PC-3 (cell line): ENCODE measurements at regions of chr12 and their contacts with region 1.

Region 1: GRCh38 chr12:26097046-26097878 is 27.6 kb downstream of the BHLHE41 start:
- DNase-seq: peak; percentile 93
- ATAC-seq: peak; percentile 94
- H3K4me3 ChIP-seq: 0 out of 2 replicates have a peak overlapping the region, but pooled peaks have one; percentile 8
- H3K27ac ChIP-seq: peak overlapping the region; percentile 36
- H3K4me1 ChIP-seq: peaks cover 50% of the 10 kb centered on the region
- H3K27me3 ChIP-seq: no peaks in the 10 kb centered on the region
- CTCF ChIP-seq: peak; percentile 99

Region 2: DNA sequence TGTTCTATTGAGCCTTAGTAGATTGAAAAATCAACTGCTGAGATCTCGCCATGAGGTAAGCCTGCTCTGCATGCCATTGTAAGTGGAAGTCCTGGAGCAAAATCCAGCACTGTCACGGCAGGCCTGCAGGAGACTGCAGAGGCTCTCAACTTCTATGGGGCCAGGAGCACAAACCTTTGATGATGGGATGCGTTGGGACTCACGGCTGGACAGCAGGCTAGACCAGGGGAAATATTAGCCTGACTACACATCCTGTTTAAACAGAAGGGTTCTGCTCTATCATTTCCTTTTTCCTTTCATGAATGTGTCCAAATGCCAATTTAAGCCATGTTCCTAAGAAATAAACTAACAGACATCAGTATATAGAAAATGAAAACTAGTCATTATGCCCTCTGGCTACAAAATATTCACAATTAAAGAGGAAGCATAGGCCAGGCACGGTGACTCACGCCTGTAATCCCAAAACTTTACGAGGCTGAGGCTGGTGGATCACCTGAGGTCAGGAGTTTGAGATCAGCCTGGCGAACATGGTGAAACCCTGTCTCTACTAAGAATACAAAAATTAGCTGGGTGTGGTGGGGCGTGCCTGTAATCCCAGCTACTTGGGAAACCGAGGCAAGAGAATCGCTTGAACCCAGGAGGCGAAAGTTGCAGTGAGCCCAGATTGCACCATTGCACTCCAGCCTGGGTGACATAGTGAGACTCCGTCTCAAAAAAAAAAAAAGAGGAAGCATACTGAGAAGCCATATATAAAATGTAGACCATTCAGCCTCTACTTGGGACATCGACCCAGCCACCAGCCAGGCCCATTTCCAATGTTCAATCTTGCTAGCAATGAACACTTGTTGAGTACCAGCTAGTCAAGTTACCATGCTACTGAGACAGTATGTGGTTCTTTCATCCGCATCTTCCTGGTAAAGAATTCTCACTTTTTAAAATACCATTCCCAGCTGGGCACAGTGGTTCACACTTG is 172.5 kb before region 1 on chr12:
- CTCF ChIA-PET with region 1: no interaction called
- POLR2A ChIA-PET with region 1: no interaction called
- intact Hi-C with region 1: no loop called
- DNase-seq: peak; percentile 100
- ATAC-seq: peak; percentile 83
- H3K4me3 ChIP-seq: peak overlapping the region; percentile 18; the same call in 1 of the 2 replicates
- H3K27ac ChIP-seq: peak overlapping the region; percentile 92
- H3K4me1 ChIP-seq: peaks cover 72% of the 10 kb centered on the region
- H3K27me3 ChIP-seq: no peaks in the 10 kb centered on the region
- CTCF ChIP-seq: 0 out of 2 replicates have a peak, but pooled peaks have one; percentile 27

Region 3: DNA sequence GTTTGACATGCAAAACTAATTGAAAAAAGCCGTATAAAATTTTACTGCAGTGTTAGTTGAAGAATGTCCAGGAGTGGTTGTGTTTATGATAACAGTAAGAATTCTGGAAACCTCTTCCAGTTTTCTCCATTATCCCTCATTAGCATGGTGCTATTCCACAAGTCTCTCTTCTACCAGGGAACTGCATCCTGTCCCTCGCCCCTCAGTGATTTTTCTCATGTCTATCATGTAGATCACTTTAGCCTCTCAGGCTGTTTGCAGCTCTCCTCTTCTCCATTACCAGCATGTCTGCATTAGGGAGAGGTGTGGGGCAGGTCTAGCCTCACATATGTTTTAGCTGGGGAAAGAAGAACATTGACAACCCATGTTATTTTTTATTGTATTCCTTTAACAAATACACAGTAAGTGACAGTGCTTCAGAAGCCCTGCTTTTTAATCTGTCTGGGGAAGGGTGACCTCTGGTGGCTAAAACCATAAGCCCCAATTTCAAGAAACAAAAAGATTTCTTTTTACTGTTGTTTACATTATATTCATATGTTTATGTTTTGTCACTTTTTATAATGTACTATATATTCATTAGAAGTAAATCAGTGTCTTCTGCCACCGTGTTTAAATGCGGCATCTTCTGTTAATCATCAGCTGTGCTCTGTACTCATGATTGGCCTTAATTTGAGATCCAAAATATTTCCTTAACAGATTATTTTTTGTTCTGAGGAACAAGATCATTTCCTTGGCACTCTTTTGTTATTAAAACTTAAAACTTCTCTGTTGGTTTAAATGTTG is 68.1 kb before region 1 on chr12:
- CTCF ChIA-PET with region 1: interaction called, 8 read pairs
- POLR2A ChIA-PET with region 1: no interaction called
- intact Hi-C with region 1: loop called (anchors 1 kb)
- DNase-seq: peak; percentile 85
- ATAC-seq: peak; percentile 56
- H3K4me3 ChIP-seq: no peak overlapping the region
- H3K27ac ChIP-seq: no peak overlapping the region
- H3K4me1 ChIP-seq: peaks cover 29% of the 10 kb centered on the region
- H3K27me3 ChIP-seq: no peaks in the 10 kb centered on the region
- CTCF ChIP-seq: peak; percentile 97

Region 4: DNA sequence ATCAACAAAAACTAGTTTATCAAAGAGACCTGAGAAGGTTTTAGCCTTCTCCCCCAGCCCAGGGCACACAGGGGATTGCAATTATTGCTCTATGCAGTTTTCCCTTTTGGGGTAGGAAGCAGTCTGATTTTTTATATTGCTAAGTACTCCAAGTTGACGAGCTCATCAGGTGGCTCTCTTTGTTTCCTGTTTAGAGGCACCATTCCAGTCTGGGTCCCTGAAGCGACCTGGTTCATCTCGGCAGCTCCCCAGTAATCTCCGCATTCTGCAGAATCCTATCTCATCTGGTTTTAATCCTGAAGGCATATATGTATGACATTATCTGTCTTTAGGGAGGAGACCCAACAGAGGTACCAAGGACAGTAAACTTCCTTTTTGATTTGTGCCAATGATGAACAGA is 28.8 kb before region 1 on chr12:
- CTCF ChIA-PET with region 1: no interaction called
- POLR2A ChIA-PET with region 1: no interaction called
- intact Hi-C with region 1: no loop called
- DNase-seq: no peak
- ATAC-seq: no peak
- H3K4me3 ChIP-seq: no peak overlapping the region
- H3K27ac ChIP-seq: no peak overlapping the region
- H3K4me1 ChIP-seq: no peaks in the 10 kb centered on the region
- H3K27me3 ChIP-seq: no peaks in the 10 kb centered on the region
- CTCF ChIP-seq: no peak

Region 5: DNA sequence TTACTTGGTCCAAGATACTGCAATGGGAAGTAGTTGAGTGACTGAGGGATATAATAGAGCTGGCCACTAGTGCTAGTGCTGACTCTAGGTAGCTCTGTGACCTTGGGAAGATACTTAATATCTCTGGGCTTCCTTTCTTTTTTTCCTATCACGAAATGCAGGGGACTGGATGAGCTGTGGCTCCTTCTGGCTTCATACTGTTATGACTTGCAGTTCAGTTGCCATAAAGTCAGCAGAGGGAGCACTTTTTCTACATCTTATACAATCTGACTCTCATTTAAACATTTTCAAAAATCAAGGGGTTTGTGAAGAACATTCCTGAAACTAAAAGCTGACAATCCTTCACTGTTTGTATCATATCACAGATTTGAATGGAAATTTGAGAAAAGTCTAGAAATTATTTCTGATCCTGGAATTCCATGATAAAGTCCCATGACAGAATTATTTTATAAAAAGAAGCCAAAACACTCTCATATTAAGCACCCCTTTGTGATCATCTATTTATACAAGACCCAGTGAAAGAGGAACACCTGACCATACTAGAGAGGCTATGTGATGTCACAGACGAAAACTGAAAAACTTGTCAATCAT is 22.2 kb after region 1 on chr12:
- CTCF ChIA-PET with region 1: interaction called, 5 read pairs
- POLR2A ChIA-PET with region 1: no interaction called
- intact Hi-C with region 1: loop called (anchors 1 kb)
- DNase-seq: peak; percentile 88
- ATAC-seq: peak; percentile 23
- H3K4me3 ChIP-seq: peak overlapping the region; percentile 77
- H3K27ac ChIP-seq: peak overlapping the region; percentile 74
- H3K4me1 ChIP-seq: peaks cover 54% of the 10 kb centered on the region
- H3K27me3 ChIP-seq: no peaks in the 10 kb centered on the region
- CTCF ChIP-seq: peak; percentile 94

Region 6: DNA sequence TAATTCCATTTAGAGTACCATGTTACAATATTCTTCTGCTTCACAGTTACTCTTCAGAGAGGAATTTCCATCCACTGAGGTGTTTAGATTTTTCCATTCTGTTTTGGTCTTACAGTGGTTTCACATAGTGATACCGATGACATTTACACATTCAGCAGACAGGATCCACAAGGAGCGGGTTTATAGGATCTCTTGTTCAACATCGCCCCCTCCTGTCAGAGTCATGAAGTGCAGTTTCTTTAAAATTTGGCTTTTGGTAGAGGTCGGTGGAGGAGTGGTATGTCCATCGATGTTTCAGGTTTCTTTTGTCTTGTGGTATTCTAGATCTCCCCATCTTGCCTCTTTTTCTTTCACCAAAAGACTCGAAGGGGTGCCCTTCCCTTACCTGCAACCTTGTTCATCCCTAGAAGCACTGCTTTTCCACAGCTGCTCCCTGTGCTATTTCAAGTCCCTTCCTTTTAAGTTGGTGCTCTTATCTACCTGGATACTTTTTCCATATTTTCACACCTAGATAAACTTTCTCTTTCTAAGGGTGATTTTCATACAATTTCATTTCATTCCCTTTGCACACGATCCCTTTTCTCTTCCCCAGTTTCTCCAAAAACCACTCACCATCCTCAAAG is 554.4 kb after region 1 on chr12:
- CTCF ChIA-PET with region 1: no interaction called
- POLR2A ChIA-PET with region 1: no interaction called
- intact Hi-C with region 1: loop called (anchors 1 kb)
- DNase-seq: peak; percentile 97
- ATAC-seq: peak; percentile 85
- H3K4me3 ChIP-seq: no peak overlapping the region
- H3K27ac ChIP-seq: no peak overlapping the region
- H3K4me1 ChIP-seq: peaks cover 22% of the 10 kb centered on the region
- H3K27me3 ChIP-seq: no peaks in the 10 kb centered on the region
- CTCF ChIP-seq: peak; percentile 99

Region 7: GRCh38 chr12:26832822-26833742 is 735.8 kb after region 1 on chr12 and contains the start of gene ITPR2:
- CTCF ChIA-PET with region 1: no interaction called
- POLR2A ChIA-PET with region 1: interaction called, 12 read pairs
- intact Hi-C with region 1: no loop called
- DNase-seq: peak; percentile 97
- ATAC-seq: peak; percentile 85
- H3K4me3 ChIP-seq: peak within 1 kb of the TSS; percentile 81
- H3K27ac ChIP-seq: peak within 1 kb of the TSS; percentile 53
- H3K4me1 ChIP-seq: peaks cover 6% of the 10 kb centered on the region; the same call in 1 of the 2 replicates
- H3K27me3 ChIP-seq: no peaks in the 10 kb centered on the region
- CTCF ChIP-seq: peak; percentile 40; the same call in 1 of the 2 replicates
- total RNA-seq, gene ITPR2: 4.0 and 10.2 TPM in 2 replicates